ENCODE measurements at regions of chr18 and their contacts with region 1.

Region 1: GRCh38 chr18:46281185-46282176 is 177.3 kb downstream of the HAUS1 start:
- DNase-seq: peak; percentile 84
- ATAC-seq: peak; percentile 83
- H3K4me3 Mint-ChIP-seq: no peak overlapping the region
- H3K27ac Mint-ChIP-seq: no peak overlapping the region
- H3K4me1 Mint-ChIP-seq: peaks cover 30% of the 10 kb centered on the region
- H3K27me3 Mint-ChIP-seq: no peaks in the 10 kb centered on the region; the same call in 1 of the 2 replicates
- CTCF ChIP-seq: peak; percentile 83

Region 2: DNA sequence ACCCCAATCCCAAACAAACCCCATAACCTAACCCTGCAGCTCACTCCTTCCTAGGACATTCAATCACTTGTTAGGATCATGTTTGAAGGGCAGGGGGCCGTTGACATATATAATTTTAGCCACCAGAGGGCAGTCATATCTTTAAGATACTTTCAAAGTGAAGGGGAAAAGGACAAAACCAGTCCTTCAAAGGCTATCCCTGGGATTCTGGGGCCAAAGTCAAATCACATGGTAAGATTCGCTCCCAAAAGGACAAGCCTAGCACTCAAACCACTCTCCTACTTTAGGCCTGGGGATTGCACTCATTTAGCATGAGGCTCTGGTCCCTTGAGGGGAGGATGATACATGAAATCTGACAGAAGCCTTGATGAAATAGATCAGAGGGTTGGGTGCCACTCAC is 132.7 kb before region 1 on chr18:
- CTCF ChIA-PET with region 1: interaction called, 17 read pairs
- POLR2A ChIA-PET with region 1: no interaction called
- DNase-seq: peak; percentile 66
- ATAC-seq: peak; percentile 67
- H3K4me3 Mint-ChIP-seq: no peak overlapping the region
- H3K27ac Mint-ChIP-seq: 0 out of 2 replicates have a peak overlapping the region, but pooled peaks have one; percentile 20
- H3K4me1 Mint-ChIP-seq: peaks cover 29% of the 10 kb centered on the region
- H3K27me3 Mint-ChIP-seq: no peaks in the 10 kb centered on the region
- CTCF ChIP-seq: peak; percentile 68

Region 3: GRCh38 chr18:46333431-46334135 is 52.1 kb after region 1 on chr18:
- CTCF ChIA-PET with region 1: interaction called, 17 read pairs
- POLR2A ChIA-PET with region 1: no interaction called
- DNase-seq: peak; percentile 50
- ATAC-seq: peak; percentile 21
- H3K4me3 Mint-ChIP-seq: peak overlapping the region; percentile 72
- H3K27ac Mint-ChIP-seq: no peak overlapping the region
- H3K4me1 Mint-ChIP-seq: peaks cover 43% of the 10 kb centered on the region
- H3K27me3 Mint-ChIP-seq: peaks cover 23% of the 10 kb centered on the region
- CTCF ChIP-seq: no peak

Region 4: GRCh38 chr18:46350598-46351159 is 69.2 kb after region 1 on chr18:
- CTCF ChIA-PET with region 1: interaction called, 34 read pairs
- POLR2A ChIA-PET with region 1: no interaction called
- DNase-seq: no peak
- ATAC-seq: no peak
- H3K4me3 Mint-ChIP-seq: no peak overlapping the region
- H3K27ac Mint-ChIP-seq: no peak overlapping the region; the same call in 1 of the 2 replicates
- H3K4me1 Mint-ChIP-seq: peaks cover 5% of the 10 kb centered on the region
- H3K27me3 Mint-ChIP-seq: no peaks in the 10 kb centered on the region
- CTCF ChIP-seq: no peak

Region 5: DNA sequence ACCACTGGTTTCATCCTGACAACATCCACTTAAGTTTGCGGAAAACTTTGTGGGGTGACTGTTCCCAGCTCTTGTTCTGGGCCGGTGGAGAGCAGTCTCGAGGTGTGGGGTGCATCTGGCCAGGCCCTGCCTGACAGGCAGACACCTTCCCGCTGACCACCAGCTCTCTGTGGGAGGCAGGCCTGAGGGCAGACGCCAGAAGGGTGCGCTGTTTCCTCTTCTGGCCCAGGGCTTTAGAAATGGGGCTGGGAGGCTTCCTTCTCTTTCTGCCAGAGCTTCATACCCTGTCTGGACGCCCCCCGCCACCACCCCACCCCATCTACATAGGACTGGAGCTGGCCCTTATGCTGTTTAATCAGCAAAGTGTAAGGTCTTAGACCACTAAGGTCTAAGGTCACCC is 111.7 kb after region 1 on chr18:
- CTCF ChIA-PET with region 1: interaction called, 36 read pairs
- POLR2A ChIA-PET with region 1: no interaction called
- DNase-seq: peak; percentile 82
- ATAC-seq: peak; percentile 93
- H3K4me3 Mint-ChIP-seq: no peak overlapping the region
- H3K27ac Mint-ChIP-seq: no peak overlapping the region
- H3K4me1 Mint-ChIP-seq: no peaks in the 10 kb centered on the region
- H3K27me3 Mint-ChIP-seq: no peaks in the 10 kb centered on the region
- CTCF ChIP-seq: peak; percentile 29; the same call in 1 of the 2 replicates

Region 6: DNA sequence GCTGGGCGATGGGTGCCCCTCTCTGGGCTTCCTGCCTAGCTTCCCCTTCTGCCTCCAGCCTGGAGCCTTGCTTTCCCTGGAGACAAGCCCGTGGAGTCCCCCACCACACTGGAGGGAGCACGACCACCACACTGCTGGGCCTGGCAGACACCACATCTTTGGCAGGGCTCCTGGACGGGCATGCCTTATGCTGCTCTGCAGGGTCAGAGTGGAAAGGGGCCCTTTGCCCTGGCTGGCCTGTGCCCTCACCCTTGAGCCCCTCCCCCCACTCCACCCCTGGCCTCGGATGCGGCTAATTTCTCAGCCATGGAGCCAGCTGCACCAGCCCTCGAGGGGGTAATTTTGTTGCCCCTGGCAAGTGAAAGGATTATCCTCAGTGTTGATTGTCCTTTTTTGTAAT is 181.0 kb after region 1 on chr18:
- CTCF ChIA-PET with region 1: interaction called, 23 read pairs
- POLR2A ChIA-PET with region 1: no interaction called
- DNase-seq: no peak
- ATAC-seq: no peak
- H3K4me3 Mint-ChIP-seq: no peak overlapping the region
- H3K27ac Mint-ChIP-seq: no peak overlapping the region
- H3K4me1 Mint-ChIP-seq: peaks cover 61% of the 10 kb centered on the region
- H3K27me3 Mint-ChIP-seq: peaks cover 4% of the 10 kb centered on the region; the same call in 1 of the 2 replicates
- CTCF ChIP-seq: no peak

Region 7: GRCh38 chr18:46518438-46518837 is 237.0 kb after region 1 on chr18:
- CTCF ChIA-PET with region 1: interaction called, 41 read pairs
- POLR2A ChIA-PET with region 1: no interaction called
- DNase-seq: peak; percentile 38
- ATAC-seq: peak; percentile 68
- H3K4me3 Mint-ChIP-seq: no peak overlapping the region
- H3K27ac Mint-ChIP-seq: no peak overlapping the region
- H3K4me1 Mint-ChIP-seq: no peaks in the 10 kb centered on the region
- H3K27me3 Mint-ChIP-seq: peaks cover 2% of the 10 kb centered on the region
- CTCF ChIP-seq: no peak